ENCODE measurements at regions of chr17 and their contacts with region 1.

Region 1: GRCh38 chr17:82716203-82717010 is at the start of gene FN3KRP:
- DNase-seq: peak; percentile 95
- ATAC-seq: peak; percentile 91
- H3K4me3 Mint-ChIP-seq: peak within 1 kb of the TSS; percentile 93
- H3K27ac Mint-ChIP-seq: peak within 1 kb of the TSS; percentile 88
- H3K4me1 Mint-ChIP-seq: peaks cover 10% of the 10 kb centered on the region
- H3K27me3 Mint-ChIP-seq: no peaks in the 10 kb centered on the region
- total RNA-seq, gene FN3KRP: 28.3 to 36.3 TPM

Region 2: GRCh38 chr17:82592767-82593589 is 123.4 kb before region 1 on chr17:
- CTCF ChIA-PET with region 1: no interaction called
- POLR2A ChIA-PET with region 1: no interaction called
- intact Hi-C with region 1: loop called in 1 of 2 experiments (anchors 1 kb)
- DNase-seq: peak; percentile 76
- ATAC-seq: peak; percentile 25
- H3K4me3 Mint-ChIP-seq: peak overlapping the region; percentile 71
- H3K27ac Mint-ChIP-seq: peak overlapping the region; percentile 98
- H3K4me1 Mint-ChIP-seq: peaks cover 45% of the 10 kb centered on the region
- H3K27me3 Mint-ChIP-seq: no peaks in the 10 kb centered on the region

Region 3: DNA sequence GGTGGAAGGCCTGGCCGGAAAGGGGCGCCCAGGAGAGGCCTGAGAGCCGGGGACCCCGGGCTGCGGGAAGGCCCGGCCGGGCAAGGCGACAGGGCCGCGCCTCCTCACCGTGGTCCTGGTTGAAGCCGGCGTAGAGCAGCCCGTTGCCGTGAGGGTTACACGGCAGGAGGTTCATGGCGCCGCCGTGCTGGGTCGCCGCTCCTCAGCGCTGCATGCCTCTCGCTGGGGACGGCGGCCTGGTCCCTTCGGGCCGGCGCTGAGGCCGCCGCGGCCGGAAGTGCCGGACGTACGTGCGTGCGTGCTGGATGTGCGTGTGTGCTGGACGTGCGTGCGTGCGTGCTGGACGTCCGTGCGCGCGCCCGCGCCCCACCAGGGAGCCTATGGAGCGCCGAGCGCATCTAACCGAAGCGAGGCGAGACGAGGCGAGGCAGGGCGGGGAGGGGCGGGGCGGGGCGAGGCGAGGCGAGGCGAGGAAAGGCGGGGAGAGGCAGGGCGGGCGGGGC is 68.2 kb before region 1 on chr17 and contains the start of gene WDR45B:
- CTCF ChIA-PET with region 1: interaction called, 3 read pairs
- POLR2A ChIA-PET with region 1: no interaction called
- intact Hi-C with region 1: loop called (anchors 1 kb)
- DNase-seq: peak; percentile 95
- ATAC-seq: peak; percentile 88
- H3K4me3 Mint-ChIP-seq: peak within 1 kb of the TSS; percentile 82
- H3K27ac Mint-ChIP-seq: peak within 1 kb of the TSS; percentile 65
- H3K4me1 Mint-ChIP-seq: peaks cover 24% of the 10 kb centered on the region
- H3K27me3 Mint-ChIP-seq: no peaks in the 10 kb centered on the region
- total RNA-seq, gene WDR45B: 74.1 to 74.8 TPM

Region 4: DNA sequence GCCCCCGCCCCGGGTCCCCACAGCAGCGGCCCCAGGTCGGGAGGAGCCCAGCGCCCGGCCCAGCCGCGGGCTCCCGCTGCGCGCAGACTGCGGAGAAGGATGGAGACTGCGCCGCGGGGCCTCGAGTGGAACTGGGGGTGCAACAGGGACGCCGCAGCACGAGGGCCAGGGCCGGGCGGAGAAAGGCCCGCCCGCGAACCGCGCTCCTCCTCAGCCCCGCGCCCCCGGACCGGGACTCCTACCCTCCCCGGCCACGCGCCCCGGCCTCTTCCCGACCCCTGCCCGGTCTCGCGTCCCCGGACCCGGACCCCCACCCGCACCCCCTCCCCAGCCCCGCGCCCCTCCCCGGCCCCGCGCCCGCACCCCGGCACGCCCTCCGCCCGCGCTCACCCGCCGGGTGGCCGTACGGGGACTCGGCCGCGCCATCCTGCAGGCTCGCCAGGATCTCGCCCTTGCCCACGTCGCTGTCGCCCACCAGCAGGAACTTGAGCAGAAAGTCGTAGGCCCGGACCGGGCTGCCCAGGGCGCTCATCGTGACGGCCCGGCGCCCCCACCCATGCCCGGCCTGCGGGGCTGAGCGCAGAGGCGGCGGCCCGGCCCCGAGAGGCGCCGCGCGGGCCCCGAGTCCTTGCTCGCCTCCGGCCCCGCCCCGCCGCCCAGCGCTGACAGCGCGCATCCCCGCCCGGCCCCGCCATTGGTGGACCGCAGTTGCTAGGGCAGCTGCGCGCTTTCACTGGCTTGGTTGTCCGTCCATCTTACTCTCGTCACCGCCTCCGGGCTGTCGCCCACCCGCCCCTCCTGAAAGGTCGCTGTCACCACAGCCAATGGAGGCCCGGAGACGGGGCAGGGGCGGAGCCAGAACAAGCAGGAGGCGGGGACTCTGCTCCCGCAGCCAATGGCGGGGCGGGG is 18.1 kb before region 1 on chr17 and contains the start of gene RAB40B:
- CTCF ChIA-PET with region 1: no interaction called
- POLR2A ChIA-PET with region 1: no interaction called
- intact Hi-C with region 1: loop called in 1 of 2 experiments (anchors 1 kb)
- DNase-seq: peak; percentile 99
- ATAC-seq: peak; percentile 99
- H3K4me3 Mint-ChIP-seq: peak within 1 kb of the TSS; percentile 67
- H3K27ac Mint-ChIP-seq: peak within 1 kb of the TSS; percentile 51
- H3K4me1 Mint-ChIP-seq: peaks cover 10% of the 10 kb centered on the region
- H3K27me3 Mint-ChIP-seq: peaks cover 3% of the 10 kb centered on the region
- total RNA-seq, gene RAB40B: 3.2 to 4.1 TPM

Region 5: DNA sequence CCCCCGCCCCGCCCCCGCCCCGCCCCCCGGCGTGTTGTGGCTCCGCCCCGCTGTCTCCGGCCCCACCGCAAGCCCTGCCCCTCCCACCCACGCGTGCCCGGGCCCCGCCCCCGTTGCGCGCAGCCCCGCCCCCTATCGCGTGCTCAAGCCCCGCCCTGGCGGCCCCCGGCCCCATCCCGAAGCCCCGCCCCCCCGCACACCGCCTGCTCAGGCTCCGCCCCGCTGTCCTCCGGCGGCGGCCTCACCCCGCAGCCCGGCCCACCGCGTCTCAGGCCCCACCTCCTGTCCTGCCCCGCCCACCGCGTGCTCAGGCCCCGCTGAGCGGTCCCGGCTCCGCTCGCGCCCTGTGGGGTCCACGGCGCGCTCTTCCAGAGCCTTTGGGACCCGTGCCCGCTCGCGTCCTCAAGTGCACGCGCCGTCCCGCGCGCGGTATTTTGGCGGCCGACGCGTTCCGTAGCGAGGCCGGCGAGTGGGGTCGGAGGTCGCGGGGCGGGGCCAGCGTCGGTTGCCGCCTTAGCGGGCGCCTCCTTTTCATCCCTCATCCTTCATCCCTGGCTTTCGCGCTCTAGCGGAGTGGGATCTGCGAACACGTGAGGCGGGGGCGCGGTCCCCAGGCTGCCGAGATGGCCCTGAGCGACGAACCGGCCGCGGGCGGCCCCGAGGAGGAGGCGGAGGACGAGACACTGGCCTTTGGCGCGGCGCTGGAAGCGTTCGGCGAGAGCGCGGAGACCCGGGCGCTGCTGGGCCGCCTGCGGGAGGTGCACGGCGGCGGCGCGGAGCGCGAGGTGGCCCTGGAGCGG is 35.4 kb after region 1 on chr17 and contains the start of gene TBCD:
- CTCF ChIA-PET with region 1: no interaction called
- POLR2A ChIA-PET with region 1: no interaction called
- intact Hi-C with region 1: loop called (anchors 1 to 5 kb)
- DNase-seq: peak; percentile 95
- ATAC-seq: peak; percentile 83
- H3K4me3 Mint-ChIP-seq: peak within 1 kb of the TSS; percentile 84
- H3K27ac Mint-ChIP-seq: peak within 1 kb of the TSS; percentile 13
- H3K4me1 Mint-ChIP-seq: peaks cover 26% of the 10 kb centered on the region
- H3K27me3 Mint-ChIP-seq: no peaks in the 10 kb centered on the region
- total RNA-seq, gene TBCD: 83.3 to 97.2 TPM

Region 6: GRCh38 chr17:83079352-83079747 is 362.9 kb after region 1 on chr17 and contains the start of gene METRNL:
- CTCF ChIA-PET with region 1: no interaction called
- POLR2A ChIA-PET with region 1: no interaction called
- intact Hi-C with region 1: loop called in 1 of 2 experiments (anchors 1 kb)
- DNase-seq: peak; percentile 82
- ATAC-seq: peak; percentile 21
- H3K4me3 Mint-ChIP-seq: peak within 1 kb of the TSS; percentile 41
- H3K27ac Mint-ChIP-seq: no peak within 1 kb of the TSS
- H3K4me1 Mint-ChIP-seq: peaks cover 26% of the 10 kb centered on the region
- H3K27me3 Mint-ChIP-seq: peaks cover 7% of the 10 kb centered on the region
- total RNA-seq, gene METRNL: 22.4 to 26.3 TPM